PC-3 (cell line): ENCODE measurements at regions of chr2 and their contacts with region 1.

Region 1: DNA sequence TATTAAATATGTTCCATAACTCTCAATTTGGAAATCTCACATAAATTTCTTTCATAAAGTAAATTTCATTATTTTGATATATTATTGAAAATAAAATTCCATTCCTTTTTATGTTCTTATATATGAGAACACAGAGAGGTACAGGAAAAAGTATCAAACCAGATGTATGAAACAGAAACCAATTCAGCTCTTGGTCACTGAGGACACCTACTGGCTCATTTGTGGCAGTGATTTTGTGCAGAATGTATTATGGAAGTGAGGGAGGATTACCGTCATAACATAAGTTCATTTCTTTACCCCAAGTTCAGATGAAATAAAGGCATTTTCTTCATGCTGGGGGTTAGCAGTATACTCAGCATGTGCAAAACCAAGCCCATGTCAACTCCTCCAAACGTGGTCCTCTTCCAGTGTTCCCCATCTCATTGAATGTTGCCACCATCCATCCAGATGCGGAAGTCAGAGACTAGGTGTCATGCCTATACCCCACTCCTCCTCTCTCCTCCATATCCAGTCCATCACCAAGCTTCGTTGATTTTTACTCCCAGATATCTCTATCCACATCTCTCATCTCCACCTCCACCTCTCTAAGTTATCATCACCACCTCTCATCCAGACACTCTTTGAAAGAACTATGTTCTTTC is 41.7 kb upstream of the MALL start:
- DNase-seq: peak; percentile 82
- ATAC-seq: peak; percentile 89
- H3K4me3 ChIP-seq: no peak overlapping the region
- H3K27ac ChIP-seq: peak overlapping the region; percentile 95
- H3K4me1 ChIP-seq: peaks cover 8% of the 10 kb centered on the region
- H3K27me3 ChIP-seq: no peaks in the 10 kb centered on the region
- CTCF ChIP-seq: peak; percentile 88

Region 2: GRCh38 chr2:110105608-110106467 is 51.4 kb before region 1 on chr2:
- CTCF ChIA-PET with region 1: interaction called, 5 read pairs
- POLR2A ChIA-PET with region 1: no interaction called
- intact Hi-C with region 1: loop called (anchors 2 kb)
- DNase-seq: peak; percentile 99
- ATAC-seq: peak; percentile 57
- H3K4me3 ChIP-seq: peak overlapping the region; percentile 41
- H3K27ac ChIP-seq: peak overlapping the region; percentile 98
- H3K4me1 ChIP-seq: peaks cover 79% of the 10 kb centered on the region
- H3K27me3 ChIP-seq: no peaks in the 10 kb centered on the region
- CTCF ChIP-seq: no peak